ENCODE measurements at regions of chr19 and their contacts with region 1.

Region 1: GRCh38 chr19:48290771-48291488 is 21.0 kb downstream of the ZNF114 start:
- DNase-seq: peak; percentile 42
- H3K4me3 Mint-ChIP-seq: peak overlapping the region; percentile 76
- H3K27ac Mint-ChIP-seq: no peak overlapping the region
- H3K4me1 Mint-ChIP-seq: peaks cover 3% of the 10 kb centered on the region
- H3K27me3 Mint-ChIP-seq: no peaks in the 10 kb centered on the region

Region 2: GRCh38 chr19:48210005-48210404 is 80.9 kb before region 1 on chr19:
- intact Hi-C with region 1: no loop called
- DNase-seq: no peak
- H3K4me3 Mint-ChIP-seq: no peak overlapping the region
- H3K27ac Mint-ChIP-seq: no peak overlapping the region
- H3K4me1 Mint-ChIP-seq: peaks cover 10% of the 10 kb centered on the region
- H3K27me3 Mint-ChIP-seq: no peaks in the 10 kb centered on the region

Region 3: GRCh38 chr19:48271531-48272151 is 19.3 kb before region 1 on chr19:
- intact Hi-C with region 1: loop called (anchors 1 kb)
- DNase-seq: no peak
- H3K4me3 Mint-ChIP-seq: peak overlapping the region; percentile 80
- H3K27ac Mint-ChIP-seq: no peak overlapping the region
- H3K4me1 Mint-ChIP-seq: peaks cover 5% of the 10 kb centered on the region
- H3K27me3 Mint-ChIP-seq: peaks cover 16% of the 10 kb centered on the region

Measured in activated T-helper 2 cell treated with anti-CD3 and anti-CD28 coated beads, Interferon-gamma antibody, Interleukin-2, Interleukin-4, amounts not matched to agents 10 μg/mL and 5 μg/mL and 100 μg/mL, durations not matched to agents 14 hours and 24 hours and 36 hours (primary cell).